ENCODE measurements at regions of chr5 and their contacts with region 1.

Region 1: DNA sequence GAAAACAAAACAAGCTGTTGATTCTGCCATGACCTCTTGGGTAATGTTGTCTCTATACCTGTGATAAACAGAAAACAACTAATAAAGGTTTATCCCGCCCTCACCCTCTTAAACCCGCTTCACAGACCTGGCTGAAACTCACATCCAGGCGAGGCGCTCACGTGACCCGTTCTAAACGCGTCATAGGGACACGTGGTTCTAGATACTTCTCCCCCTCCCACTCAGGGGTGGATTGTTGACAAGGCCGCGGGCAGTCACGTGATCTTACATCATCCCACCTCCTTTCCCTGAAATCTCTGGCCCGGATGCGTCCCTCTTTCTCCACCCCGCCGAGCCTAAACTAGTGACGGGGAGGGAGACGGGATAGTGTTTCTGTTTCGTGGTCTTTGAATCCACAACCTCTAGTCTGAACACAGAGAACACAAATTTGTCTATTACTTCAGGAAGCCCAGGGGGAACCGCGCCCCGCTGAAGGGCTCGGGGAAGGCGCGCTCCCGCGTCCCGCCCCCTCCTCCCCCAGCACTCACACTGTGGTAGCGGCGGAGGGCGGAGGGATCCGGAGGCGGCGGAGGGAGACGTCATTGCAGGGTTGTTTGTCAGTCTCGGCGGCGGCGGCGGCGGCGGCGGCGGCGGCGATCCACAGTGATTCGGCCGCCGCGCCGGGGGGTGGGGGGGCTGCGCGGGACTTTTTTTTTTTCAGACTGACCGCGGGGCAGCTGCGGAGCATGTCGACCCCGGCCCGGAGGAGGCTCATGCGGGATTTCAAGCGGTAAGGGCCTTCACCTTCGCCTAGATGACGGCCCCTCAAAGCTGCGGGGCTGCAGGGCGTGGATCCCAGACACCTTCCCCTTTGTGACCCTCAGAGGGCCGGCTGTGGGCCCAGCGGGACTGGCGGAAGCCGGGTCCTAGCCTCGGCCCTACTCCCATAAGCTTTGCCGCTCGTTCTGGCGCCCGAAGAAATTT is at the start of gene UBE2B:
- DNase-seq: peak; percentile 96 to 99 (median 98)
- ATAC-seq: peak; percentile 86
- H3K4me3 ChIP-seq: peak within 1 kb of the TSS; percentile 94
- H3K4me3 Mint-ChIP-seq: peak within 1 kb of the TSS; percentile 82 to 99 (median 96)
- H3K27ac ChIP-seq: peak within 1 kb of the TSS; percentile 100
- H3K27ac Mint-ChIP-seq: peak within 1 kb of the TSS; percentile 97 to 100 (median 100)
- H3K4me1 ChIP-seq: peaks cover 25 to 38% of the 10 kb centered on the region in 2 donors
- H3K4me1 Mint-ChIP-seq: peaks cover 30 to 76% (median 60%) of the 10 kb centered on the region in 7 donors
- H3K27me3 ChIP-seq: no peaks in the 10 kb centered on the region
- H3K27me3 Mint-ChIP-seq: peaks cover 0 to 8% (median 0%) of the 10 kb centered on the region in 5 donors
- total RNA-seq, gene UBE2B: 91.4 to 141 (median 124) TPM

Region 2: GRCh38 chr5:132662925-132663770 is 1708.0 kb before region 1 on chr5:
- CTCF ChIA-PET with region 1: no interaction called
- POLR2A ChIA-PET with region 1: no interaction called
- intact Hi-C with region 1: no loop called
- DNase-seq: peak in 1 of 9 donors; percentile 69
- ATAC-seq: peak; percentile 33
- H3K4me3 ChIP-seq: no peak overlapping the region
- H3K4me3 Mint-ChIP-seq: peak overlapping the region in 1 of 10 donors; percentile 60
- H3K27ac ChIP-seq: no peak overlapping the region
- H3K27ac Mint-ChIP-seq: peak overlapping the region in 1 of 9 donors; percentile 91
- H3K4me1 ChIP-seq: peaks cover 0 to 28% of the 10 kb centered on the region in 2 donors
- H3K4me1 Mint-ChIP-seq: peaks cover 0 to 58% (median 0%) of the 10 kb centered on the region in 7 donors
- H3K27me3 ChIP-seq: no peaks in the 10 kb centered on the region
- H3K27me3 Mint-ChIP-seq: peaks cover 0 to 16% (median 9%) of the 10 kb centered on the region in 5 donors

Region 3: GRCh38 chr5:134004592-134005375 is 366.4 kb before region 1 on chr5 and contains the start of gene VDAC1:
- CTCF ChIA-PET with region 1: no interaction called
- POLR2A ChIA-PET with region 1: no interaction called
- intact Hi-C with region 1: loop called (anchors 2 to 10 kb)
- DNase-seq: peak; percentile 74 to 92 (median 89)
- ATAC-seq: peak; percentile 85
- H3K4me3 ChIP-seq: peak within 1 kb of the TSS; percentile 83
- H3K4me3 Mint-ChIP-seq: peak within 1 kb of the TSS; percentile 89 to 97 (median 92)
- H3K27ac ChIP-seq: peak within 1 kb of the TSS; percentile 98
- H3K27ac Mint-ChIP-seq: peak within 1 kb of the TSS; percentile 86 to 97 (median 96)
- H3K4me1 ChIP-seq: peaks cover 17 to 26% of the 10 kb centered on the region in 2 donors
- H3K4me1 Mint-ChIP-seq: peaks cover 25 to 47% (median 43%) of the 10 kb centered on the region in 7 donors
- H3K27me3 ChIP-seq: no peaks in the 10 kb centered on the region
- H3K27me3 Mint-ChIP-seq: no peaks in the 10 kb centered on the region
- total RNA-seq, gene VDAC1: 37.8 to 259 (median 43.7) TPM

Region 4: DNA sequence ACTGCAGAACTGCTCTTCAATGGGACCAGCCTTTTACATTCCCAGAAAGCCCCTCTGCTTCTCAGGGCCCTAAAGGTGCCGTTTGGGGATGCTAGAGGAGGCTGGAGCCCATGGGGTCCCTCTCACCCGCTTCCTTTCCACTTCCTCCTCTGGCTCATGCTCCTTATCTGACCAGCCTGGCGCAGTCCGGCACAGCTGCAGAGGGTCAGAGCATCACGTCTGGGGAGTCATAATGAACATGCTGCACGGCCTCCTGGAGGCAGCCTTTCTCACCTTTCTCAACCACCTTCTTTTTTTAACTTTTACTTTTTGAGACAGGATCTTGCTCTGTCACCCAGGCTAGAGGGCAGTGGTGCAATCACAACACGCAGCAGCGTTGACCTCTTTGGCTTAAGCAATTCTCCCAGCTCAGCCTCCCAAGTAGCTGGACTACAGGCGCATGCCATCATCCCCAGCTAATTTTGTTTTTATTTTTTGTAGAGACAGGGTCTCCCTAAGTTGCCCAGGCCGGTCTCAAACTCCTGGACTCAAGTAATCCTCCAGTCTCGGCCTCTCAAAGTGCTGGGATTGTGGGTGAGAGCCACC is 271.8 kb before region 1 on chr5:
- CTCF ChIA-PET with region 1: no interaction called
- POLR2A ChIA-PET with region 1: no interaction called
- intact Hi-C with region 1: no loop called
- DNase-seq: no peak
- ATAC-seq: no peak
- H3K4me3 ChIP-seq: peak overlapping the region; percentile 10
- H3K4me3 Mint-ChIP-seq: peak overlapping the region in 9 of 10 donors; percentile 60 to 79 (median 75)
- H3K27ac ChIP-seq: peak overlapping the region; percentile 80
- H3K27ac Mint-ChIP-seq: peak overlapping the region; percentile 80 to 98 (median 95)
- H3K4me1 ChIP-seq: peaks cover 53 to 86% of the 10 kb centered on the region in 2 donors
- H3K4me1 Mint-ChIP-seq: peaks cover 42 to 95% (median 72%) of the 10 kb centered on the region in 7 donors
- H3K27me3 ChIP-seq: no peaks in the 10 kb centered on the region
- H3K27me3 Mint-ChIP-seq: peaks cover 0 to 12% (median 0%) of the 10 kb centered on the region in 5 donors

Region 5: DNA sequence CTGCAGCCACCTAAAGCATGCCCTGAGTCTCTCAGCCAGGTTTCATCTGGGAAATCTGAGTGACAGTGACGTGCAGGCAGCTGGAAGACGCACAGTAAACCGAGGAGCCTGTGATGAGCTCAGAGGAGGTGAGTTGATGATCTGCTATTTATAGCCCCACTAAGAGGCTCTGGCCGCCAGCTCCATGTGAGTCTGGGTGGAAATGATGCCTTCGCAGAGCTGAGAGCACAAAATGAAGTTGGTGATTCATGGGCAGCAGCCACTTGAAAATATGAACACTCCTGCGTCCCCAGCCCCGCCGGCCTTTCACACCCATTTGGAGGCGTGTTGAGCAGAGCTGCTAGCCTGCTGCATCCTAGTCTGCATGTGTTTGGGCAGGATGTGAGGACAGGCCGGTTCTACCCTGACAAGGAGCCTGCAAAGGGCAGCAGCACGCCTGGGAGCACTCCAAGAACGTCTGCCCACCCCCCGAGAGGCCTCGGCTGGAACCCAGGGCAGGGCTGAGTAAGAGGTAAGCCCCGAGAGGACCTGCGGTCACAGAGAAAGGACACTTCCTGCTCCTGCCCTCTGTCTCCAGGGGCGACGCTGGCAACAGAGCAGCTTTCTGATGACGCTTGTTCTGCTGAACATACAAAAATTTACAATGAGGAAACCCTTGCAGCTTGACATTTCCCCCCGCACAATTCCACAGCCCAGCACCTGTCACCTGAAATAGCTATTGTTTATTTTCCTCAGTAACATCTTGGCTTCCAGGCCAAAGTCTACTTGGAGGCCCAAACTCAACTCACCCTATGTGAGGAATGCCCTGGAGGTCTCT is 65.6 kb after region 1 on chr5:
- CTCF ChIA-PET with region 1: no interaction called
- POLR2A ChIA-PET with region 1: no interaction called
- intact Hi-C with region 1: loop called in 1 of 2 experiments (anchors 2 kb)
- DNase-seq: peak; percentile 29 to 65 (median 50)
- ATAC-seq: peak; percentile 92
- H3K4me3 ChIP-seq: peak overlapping the region; percentile 24
- H3K4me3 Mint-ChIP-seq: peak overlapping the region in 9 of 10 donors; percentile 20 to 65 (median 51)
- H3K27ac ChIP-seq: no peak overlapping the region
- H3K27ac Mint-ChIP-seq: peak overlapping the region; percentile 47 to 85 (median 74)
- H3K4me1 ChIP-seq: peaks cover 0 to 11% of the 10 kb centered on the region in 2 donors
- H3K4me1 Mint-ChIP-seq: peaks cover 0 to 31% (median 14%) of the 10 kb centered on the region in 7 donors
- H3K27me3 ChIP-seq: no peaks in the 10 kb centered on the region
- H3K27me3 Mint-ChIP-seq: no peaks in the 10 kb centered on the region

Region 6: DNA sequence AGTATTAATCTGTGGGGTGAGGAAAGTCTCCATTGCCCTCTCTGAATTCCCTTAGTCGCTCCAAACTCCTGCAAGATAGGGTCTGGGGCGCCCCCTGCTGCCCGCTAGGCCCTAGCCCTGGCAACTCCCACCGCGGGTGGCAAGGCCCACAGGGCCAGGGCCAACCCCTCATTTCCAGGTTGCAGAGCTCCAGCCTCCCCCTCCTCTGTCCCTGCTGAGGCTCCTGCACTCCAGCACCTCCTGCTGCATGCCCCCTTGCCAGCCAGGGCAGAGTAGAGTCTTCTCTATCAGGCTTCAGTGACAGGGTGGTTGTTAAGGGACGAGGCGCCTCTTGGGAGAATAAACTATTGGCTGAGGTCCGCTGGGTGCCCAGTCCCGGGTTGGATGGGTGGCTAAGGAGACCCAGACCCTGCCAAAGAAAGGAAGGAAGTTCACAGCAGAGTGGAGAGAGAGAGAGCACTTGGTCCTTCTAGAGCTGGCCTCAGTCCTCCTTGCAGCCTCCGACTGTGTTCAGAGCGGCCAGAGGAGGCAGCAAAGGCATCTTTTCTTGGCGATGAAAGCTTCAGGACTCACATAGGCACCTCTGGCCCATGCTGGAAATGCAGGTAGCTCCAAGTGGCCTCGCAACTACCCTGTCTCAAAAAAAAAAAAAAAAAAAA is 215.8 kb after region 1 on chr5:
- CTCF ChIA-PET with region 1: interaction called, 3 read pairs
- POLR2A ChIA-PET with region 1: no interaction called
- intact Hi-C with region 1: loop called in 1 of 2 experiments (anchors 2 kb)
- DNase-seq: peak; percentile 56 to 88 (median 76)
- ATAC-seq: peak; percentile 93
- H3K4me3 ChIP-seq: peak overlapping the region; percentile 11
- H3K4me3 Mint-ChIP-seq: peak overlapping the region in 8 of 10 donors; percentile 9 to 63 (median 25)
- H3K27ac ChIP-seq: no peak overlapping the region
- H3K27ac Mint-ChIP-seq: peak overlapping the region; percentile 22 to 84 (median 54)
- H3K4me1 ChIP-seq: peaks cover 4% of the 10 kb centered on the region in 2 donors
- H3K4me1 Mint-ChIP-seq: peaks cover 0 to 17% (median 9%) of the 10 kb centered on the region in 7 donors
- H3K27me3 ChIP-seq: no peaks in the 10 kb centered on the region
- H3K27me3 Mint-ChIP-seq: no peaks in the 10 kb centered on the region

Region 7: GRCh38 chr5:134758504-134759341 is 387.6 kb after region 1 on chr5 and contains the start of gene DDX46:
- CTCF ChIA-PET with region 1: no interaction called
- POLR2A ChIA-PET with region 1: no interaction called
- intact Hi-C with region 1: loop called (anchors 1 kb)
- DNase-seq: peak; percentile 85 to 95 (median 91)
- ATAC-seq: peak; percentile 99
- H3K4me3 ChIP-seq: peak within 1 kb of the TSS; percentile 75
- H3K4me3 Mint-ChIP-seq: peak within 1 kb of the TSS; percentile 92 to 100 (median 99)
- H3K27ac ChIP-seq: peak within 1 kb of the TSS; percentile 87
- H3K27ac Mint-ChIP-seq: peak within 1 kb of the TSS; percentile 93 to 99 (median 97)
- H3K4me1 ChIP-seq: peaks cover 12 to 13% of the 10 kb centered on the region in 2 donors
- H3K4me1 Mint-ChIP-seq: peaks cover 20 to 47% (median 38%) of the 10 kb centered on the region in 7 donors
- H3K27me3 ChIP-seq: no peaks in the 10 kb centered on the region
- H3K27me3 Mint-ChIP-seq: no peaks in the 10 kb centered on the region
- total RNA-seq, gene DDX46: 51.2 to 72.5 (median 64.2) TPM

Region 8: DNA sequence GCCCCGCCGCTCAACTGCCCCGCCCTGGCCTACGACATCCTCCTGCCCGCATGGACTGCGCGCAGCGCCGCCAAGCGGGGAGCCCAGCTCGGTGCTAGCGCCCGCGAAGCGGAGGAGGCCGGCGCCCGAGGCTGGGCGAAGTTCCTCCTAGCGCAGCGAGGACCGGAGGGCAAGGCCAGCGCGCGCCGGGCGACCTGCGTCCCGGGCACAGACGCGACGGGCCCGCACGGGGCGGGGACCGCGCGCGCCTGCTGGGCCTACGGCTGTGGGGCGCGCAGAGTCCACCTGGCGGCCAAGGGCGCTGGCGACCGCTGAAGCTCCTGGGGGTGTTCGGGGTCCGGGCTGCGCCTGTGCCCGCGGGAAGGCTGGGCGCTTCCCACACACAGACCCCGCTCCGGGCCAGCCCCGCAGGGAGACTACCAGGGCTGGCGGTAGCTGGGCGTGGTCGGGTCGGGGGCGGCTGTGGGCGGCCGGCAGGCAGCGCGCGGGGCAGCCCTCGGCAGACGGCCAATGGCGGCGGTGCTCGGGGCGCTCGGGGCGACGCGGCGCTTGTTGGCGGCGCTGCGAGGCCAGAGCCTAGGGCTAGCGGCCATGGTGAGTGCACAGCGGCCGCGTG is 533.6 kb after region 1 on chr5 and contains the start of gene PCBD2:
- CTCF ChIA-PET with region 1: no interaction called
- POLR2A ChIA-PET with region 1: interaction called, 7 read pairs
- intact Hi-C with region 1: loop called (anchors 1 to 2 kb)
- DNase-seq: peak; percentile 83 to 96 (median 90)
- ATAC-seq: peak; percentile 94
- H3K4me3 ChIP-seq: peak within 1 kb of the TSS; percentile 71
- H3K4me3 Mint-ChIP-seq: peak within 1 kb of the TSS; percentile 90 to 99 (median 96)
- H3K27ac ChIP-seq: peak within 1 kb of the TSS; percentile 90
- H3K27ac Mint-ChIP-seq: peak within 1 kb of the TSS; percentile 93 to 100 (median 99)
- H3K4me1 ChIP-seq: no peaks in the 10 kb centered on the region
- H3K4me1 Mint-ChIP-seq: peaks cover 0 to 25% (median 5%) of the 10 kb centered on the region in 7 donors
- H3K27me3 ChIP-seq: no peaks in the 10 kb centered on the region
- H3K27me3 Mint-ChIP-seq: no peaks in the 10 kb centered on the region
- total RNA-seq, gene PCBD2: 10.6 to 15.8 (median 14.3) TPM

Measured in naive thymus-derived CD4-positive, alpha-beta T cell (primary cell).